ENCODE measurements at regions of chr15 and their contacts with region 1.

Region 1: DNA sequence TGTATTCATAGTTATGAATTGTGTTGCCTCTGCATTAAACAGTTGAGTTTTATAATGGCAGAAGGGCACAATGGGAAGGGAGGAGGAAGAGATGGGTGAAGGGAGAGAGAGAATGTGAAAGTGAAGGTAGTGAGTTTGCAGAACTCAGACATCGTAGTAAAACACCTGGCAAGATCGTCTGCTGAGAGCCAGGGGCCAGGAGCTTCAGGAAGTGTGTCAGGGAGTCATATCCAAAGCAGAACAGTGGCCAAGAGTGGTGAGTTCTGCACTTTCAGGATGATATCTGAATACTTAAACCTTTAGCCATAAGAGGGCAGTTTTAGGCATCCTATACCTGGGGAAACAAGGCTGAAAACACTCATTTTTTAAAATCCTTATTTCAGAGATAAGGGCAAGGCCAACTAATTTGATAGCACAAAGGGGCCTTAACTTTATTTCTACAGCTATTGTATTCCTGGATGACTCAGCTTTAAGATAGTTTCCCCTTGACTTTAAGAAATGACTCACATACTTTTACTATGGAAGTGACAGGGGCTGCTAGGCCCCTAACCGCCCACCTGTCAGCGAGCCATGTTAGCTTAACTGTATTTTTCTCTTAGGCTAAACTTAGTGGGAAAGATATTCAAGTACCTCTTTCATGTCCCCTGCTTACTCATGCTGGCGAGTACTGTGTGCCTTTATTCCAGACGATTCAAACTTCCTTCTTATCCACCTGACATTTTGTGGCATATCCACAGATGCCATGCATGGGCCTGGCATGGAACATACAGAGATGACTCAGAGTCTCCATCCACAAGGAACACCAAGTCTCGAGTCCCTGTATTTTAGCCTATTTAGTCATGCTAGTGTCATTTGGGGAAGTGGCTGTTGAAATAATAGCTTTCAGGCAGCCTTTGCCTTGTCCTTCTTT is 53.9 kb downstream of the RLBP1 start:
- DNase-seq: peak; percentile 66
- H3K4me3 Mint-ChIP-seq: peak overlapping the region; percentile 69
- H3K27ac Mint-ChIP-seq: peak overlapping the region; percentile 86
- H3K4me1 Mint-ChIP-seq: peaks cover 17% of the 10 kb centered on the region
- H3K27me3 Mint-ChIP-seq: no peaks in the 10 kb centered on the region

Region 2: GRCh38 chr15:88918738-88919137 is 248.8 kb before region 1 on chr15:
- intact Hi-C with region 1: loop called (anchors 5 kb)
- DNase-seq: no peak
- H3K4me3 Mint-ChIP-seq: peak overlapping the region; percentile 23
- H3K27ac Mint-ChIP-seq: peak overlapping the region; percentile 5
- H3K4me1 Mint-ChIP-seq: peaks cover 23% of the 10 kb centered on the region
- H3K27me3 Mint-ChIP-seq: peaks cover 9% of the 10 kb centered on the region

Region 3: DNA sequence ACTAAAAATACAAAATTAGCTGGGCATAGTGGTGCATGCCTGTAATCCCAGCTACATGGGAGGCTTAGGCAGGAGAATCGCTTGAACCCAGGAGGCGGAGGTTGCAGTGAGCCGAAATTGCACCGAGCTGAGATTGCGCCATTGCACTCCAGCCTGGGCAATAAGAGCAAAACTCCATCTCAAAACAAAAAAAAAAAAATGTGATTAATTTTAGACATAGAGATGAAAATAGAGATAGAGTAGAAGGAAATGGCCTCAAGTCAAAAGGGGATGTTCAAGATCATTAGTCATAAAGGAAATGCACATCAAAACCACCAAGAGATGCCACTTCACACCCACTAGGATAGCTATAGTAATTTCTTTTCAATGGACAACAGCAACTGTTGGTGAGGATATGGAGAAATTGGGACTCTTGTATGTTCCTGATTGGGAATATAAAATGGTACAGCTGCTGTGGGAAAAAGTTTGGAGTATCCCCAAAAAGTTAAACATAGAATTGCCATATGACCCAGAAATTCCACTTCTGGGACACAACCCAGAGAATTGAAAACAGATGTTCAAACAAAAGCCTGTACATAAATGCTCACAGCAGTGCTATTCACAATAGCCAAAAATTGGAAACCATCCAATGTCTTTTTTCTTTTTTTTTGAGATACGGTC is 23.9 kb before region 1 on chr15:
- intact Hi-C with region 1: loop called (anchors 1 kb)
- DNase-seq: no peak
- H3K4me3 Mint-ChIP-seq: no peak overlapping the region
- H3K27ac Mint-ChIP-seq: peak overlapping the region; percentile 58
- H3K4me1 Mint-ChIP-seq: peaks cover 28% of the 10 kb centered on the region
- H3K27me3 Mint-ChIP-seq: no peaks in the 10 kb centered on the region

Measured in activated CD4-positive, alpha-beta T cell treated with anti-CD3 and anti-CD28 coated beads, Interleukin-2, amount 10 ng/mL, durations not matched to agents 24 days and 14 days (primary cell).